Naive thymus-derived CD4-positive, alpha-beta T cell (primary cell): ENCODE measurements at regions of chr6 and their contacts with region 1.

Region 1: DNA sequence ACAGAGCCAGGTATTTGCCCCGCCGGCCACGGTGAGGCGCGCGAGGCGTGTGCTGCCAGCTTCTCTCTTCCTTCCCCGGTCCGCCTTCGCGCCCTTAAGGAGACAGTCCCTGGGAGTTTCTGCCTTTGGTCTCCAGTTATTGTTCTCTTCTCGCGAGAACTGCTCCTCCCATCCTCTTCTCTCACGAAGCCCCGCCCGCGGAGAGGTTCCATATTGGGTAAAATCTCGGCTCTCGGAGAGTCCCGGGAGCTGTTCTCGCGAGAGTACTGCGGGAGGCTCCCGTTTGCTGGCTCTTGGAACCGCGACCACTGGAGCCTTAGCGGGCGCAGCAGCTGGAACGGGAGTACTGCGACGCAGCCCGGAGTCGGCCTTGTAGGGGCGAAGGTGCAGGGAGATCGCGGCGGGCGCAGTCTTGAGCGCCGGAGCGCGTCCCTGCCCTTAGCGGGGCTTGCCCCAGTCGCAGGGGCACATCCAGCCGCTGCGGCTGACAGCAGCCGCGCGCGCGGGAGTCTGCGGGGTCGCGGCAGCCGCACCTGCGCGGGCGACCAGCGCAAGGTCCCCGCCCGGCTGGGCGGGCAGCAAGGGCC is at the start of gene MAPK14:
- DNase-seq: peak; percentile 91 to 100 (median 99)
- ATAC-seq: peak; percentile 95
- H3K4me3 ChIP-seq: peak within 1 kb of the TSS; percentile 63
- H3K4me3 Mint-ChIP-seq: peak within 1 kb of the TSS; percentile 91 to 100 (median 94)
- H3K27ac ChIP-seq: peak within 1 kb of the TSS; percentile 85
- H3K27ac Mint-ChIP-seq: peak within 1 kb of the TSS; percentile 87 to 95 (median 92)
- H3K4me1 ChIP-seq: peaks cover 16 to 23% of the 10 kb centered on the region in 2 donors
- H3K4me1 Mint-ChIP-seq: peaks cover 27 to 55% (median 43%) of the 10 kb centered on the region in 7 donors
- H3K27me3 ChIP-seq: no peaks in the 10 kb centered on the region
- H3K27me3 Mint-ChIP-seq: peaks cover 19 to 35% (median 24%) of the 10 kb centered on the region in 5 donors
- total RNA-seq, gene MAPK14: 47.2 to 81.0 (median 62.6) TPM

Region 2: DNA sequence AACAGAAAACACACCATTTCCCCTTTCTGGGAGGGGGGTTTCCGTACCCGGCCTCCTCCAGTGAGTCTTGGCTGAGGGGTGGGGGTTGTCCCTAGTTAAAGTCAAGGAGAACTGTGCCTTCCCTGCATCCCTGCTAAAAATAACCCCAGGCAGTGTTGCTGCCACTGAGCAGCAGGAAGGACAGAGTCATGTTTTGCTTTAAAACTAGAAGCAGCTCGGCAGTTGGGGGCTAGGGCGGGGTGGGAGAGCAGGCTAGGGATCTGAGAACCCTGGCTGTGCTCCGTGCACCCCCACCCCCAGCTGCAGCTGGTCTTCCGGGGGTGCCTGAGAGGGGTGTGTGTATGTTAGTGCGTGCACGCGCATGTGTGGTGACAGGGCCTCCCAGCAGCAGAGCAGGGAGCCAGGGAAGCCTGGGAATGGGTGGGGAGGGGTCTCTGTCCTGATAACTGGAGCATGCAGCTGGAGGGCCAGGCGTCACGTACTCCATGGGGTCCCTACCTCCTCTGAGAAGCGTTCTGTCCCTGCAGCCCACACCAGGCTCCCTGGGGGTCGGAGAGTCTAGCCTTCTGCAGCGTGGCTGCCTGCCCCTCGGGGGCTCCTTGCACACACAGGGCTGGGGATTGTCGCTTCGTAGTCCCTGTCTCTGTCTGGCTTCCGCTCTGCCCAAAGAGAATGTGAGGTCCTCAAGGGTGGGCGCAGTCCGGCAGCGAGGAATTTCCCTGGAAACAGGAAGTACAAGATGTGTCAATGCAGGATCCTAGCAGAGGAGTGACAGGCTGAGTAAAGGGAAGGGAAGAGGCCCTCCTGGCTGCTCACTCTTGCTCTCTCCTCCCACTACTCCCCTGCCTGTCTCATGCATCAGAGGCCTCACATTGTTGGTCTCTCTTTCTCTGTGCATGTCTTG is 307.5 kb before region 1 on chr6:
- CTCF ChIA-PET with region 1: no interaction called
- POLR2A ChIA-PET with region 1: no interaction called
- intact Hi-C with region 1: no loop called
- DNase-seq: peak in 1 of 9 donors; percentile 38
- ATAC-seq: peak; percentile 71
- H3K4me3 ChIP-seq: peak overlapping the region; percentile 11
- H3K4me3 Mint-ChIP-seq: peak overlapping the region; percentile 50 to 81 (median 70)
- H3K27ac ChIP-seq: peak overlapping the region; percentile 67
- H3K27ac Mint-ChIP-seq: peak overlapping the region; percentile 82 to 95 (median 90)
- H3K4me1 ChIP-seq: peaks cover 25 to 60% of the 10 kb centered on the region in 2 donors
- H3K4me1 Mint-ChIP-seq: peaks cover 54 to 91% (median 82%) of the 10 kb centered on the region in 7 donors
- H3K27me3 ChIP-seq: no peaks in the 10 kb centered on the region
- H3K27me3 Mint-ChIP-seq: no peaks in the 10 kb centered on the region

Region 3: DNA sequence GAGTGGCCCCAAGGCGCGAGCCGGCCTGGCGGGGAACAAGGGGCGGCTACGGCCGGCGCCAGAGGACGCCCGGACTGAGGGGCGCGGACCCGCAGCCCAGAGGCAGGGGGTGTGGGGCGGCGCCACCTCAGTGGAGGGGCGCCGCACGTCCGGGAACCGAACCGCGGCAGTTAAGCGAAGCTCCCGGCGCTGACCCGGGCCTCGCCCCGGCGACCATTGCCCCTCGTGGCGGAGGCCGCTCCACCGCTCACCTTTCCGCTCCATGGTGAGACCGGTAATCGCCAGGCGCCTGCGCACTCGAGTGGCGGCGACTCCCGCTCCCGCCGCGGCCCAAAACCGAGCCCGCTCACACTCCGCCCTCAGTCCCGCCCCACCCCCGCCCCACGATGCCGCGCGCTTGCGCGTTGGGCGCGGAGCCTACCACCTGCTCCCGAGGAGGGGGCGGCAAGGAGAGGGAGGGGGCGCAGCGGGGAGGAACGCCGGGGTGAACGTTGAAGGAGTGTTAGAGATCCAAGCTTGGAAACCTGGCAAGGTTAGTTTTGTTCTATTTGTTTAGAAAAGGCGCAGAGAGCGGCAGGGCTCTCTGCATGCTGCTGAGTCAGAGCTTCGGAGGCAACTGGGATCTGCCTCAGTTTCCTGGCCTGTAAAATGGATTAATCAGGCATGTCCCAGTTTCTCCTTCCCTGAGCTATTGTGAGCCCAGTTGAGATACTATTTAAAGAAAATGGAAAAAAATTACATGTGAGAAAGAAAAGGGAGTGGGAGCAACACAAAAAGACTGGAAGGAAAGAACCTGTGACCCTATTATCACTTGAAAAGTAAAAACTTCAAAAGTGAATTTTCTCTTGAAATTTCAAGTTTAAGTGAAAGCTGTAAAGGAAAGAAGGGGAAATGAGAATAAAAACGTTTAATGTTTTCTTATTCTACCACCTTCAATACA is 106.5 kb before region 1 on chr6 and contains the start of gene SRPK1:
- CTCF ChIA-PET with region 1: no interaction called
- POLR2A ChIA-PET with region 1: interaction called, 3 read pairs
- intact Hi-C with region 1: loop called (anchors 1 kb)
- DNase-seq: peak; percentile 58 to 92 (median 73)
- ATAC-seq: peak; percentile 87
- H3K4me3 ChIP-seq: peak within 1 kb of the TSS; percentile 98
- H3K4me3 Mint-ChIP-seq: peak within 1 kb of the TSS; percentile 87 to 100 (median 94)
- H3K27ac ChIP-seq: peak within 1 kb of the TSS; percentile 76
- H3K27ac Mint-ChIP-seq: peak within 1 kb of the TSS; percentile 81 to 98 (median 94)
- H3K4me1 ChIP-seq: peaks cover 12 to 28% of the 10 kb centered on the region in 2 donors
- H3K4me1 Mint-ChIP-seq: peaks cover 18 to 49% (median 41%) of the 10 kb centered on the region in 7 donors
- H3K27me3 ChIP-seq: no peaks in the 10 kb centered on the region
- H3K27me3 Mint-ChIP-seq: no peaks in the 10 kb centered on the region
- total RNA-seq, gene SRPK1: 29.1 to 80.9 (median 42.1) TPM

Region 4: DNA sequence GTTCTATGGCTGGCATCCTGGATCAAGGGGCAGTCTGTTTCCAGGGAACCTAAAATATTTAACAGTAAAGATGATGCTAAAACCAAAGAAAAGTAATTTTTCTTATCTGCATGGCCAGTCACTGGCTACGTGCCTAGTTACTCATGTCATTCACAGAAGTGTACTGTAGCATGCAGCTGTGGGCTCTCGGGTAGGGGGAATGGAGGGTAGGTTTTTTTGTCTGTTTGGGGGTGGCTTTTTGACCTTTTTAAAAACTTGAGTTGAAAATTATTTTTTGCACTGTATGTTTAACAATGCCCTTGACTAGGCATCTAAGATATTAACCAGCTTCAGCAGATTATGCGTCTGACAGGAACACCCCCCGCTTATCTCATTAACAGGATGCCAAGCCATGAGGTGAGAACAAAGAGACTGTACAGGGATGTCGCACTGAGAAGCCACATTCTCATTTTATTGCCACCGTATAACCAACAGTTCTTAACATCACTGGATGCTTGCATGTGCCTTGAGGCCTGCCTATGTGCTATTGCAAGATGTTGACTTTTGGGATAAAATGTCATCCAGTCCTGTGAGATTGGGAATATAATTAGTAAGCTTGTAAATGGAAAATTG is 72.4 kb after region 1 on chr6:
- CTCF ChIA-PET with region 1: interaction called, 104 read pairs
- POLR2A ChIA-PET with region 1: interaction called, 56 read pairs
- intact Hi-C with region 1: loop called (anchors 1 kb)
- DNase-seq: peak in 7 of 9 donors; percentile 63 to 81 (median 74)
- ATAC-seq: peak; percentile 89
- H3K4me3 ChIP-seq: peak overlapping the region; percentile 6
- H3K4me3 Mint-ChIP-seq: peak overlapping the region in 9 of 10 donors; percentile 56 to 85 (median 73)
- H3K27ac ChIP-seq: peak overlapping the region; percentile 52
- H3K27ac Mint-ChIP-seq: peak overlapping the region in 8 of 9 donors; percentile 87 to 97 (median 92)
- H3K4me1 ChIP-seq: peaks cover 32 to 35% of the 10 kb centered on the region in 2 donors
- H3K4me1 Mint-ChIP-seq: peaks cover 29 to 73% (median 66%) of the 10 kb centered on the region in 7 donors
- H3K27me3 ChIP-seq: no peaks in the 10 kb centered on the region
- H3K27me3 Mint-ChIP-seq: no peaks in the 10 kb centered on the region

Region 5: DNA sequence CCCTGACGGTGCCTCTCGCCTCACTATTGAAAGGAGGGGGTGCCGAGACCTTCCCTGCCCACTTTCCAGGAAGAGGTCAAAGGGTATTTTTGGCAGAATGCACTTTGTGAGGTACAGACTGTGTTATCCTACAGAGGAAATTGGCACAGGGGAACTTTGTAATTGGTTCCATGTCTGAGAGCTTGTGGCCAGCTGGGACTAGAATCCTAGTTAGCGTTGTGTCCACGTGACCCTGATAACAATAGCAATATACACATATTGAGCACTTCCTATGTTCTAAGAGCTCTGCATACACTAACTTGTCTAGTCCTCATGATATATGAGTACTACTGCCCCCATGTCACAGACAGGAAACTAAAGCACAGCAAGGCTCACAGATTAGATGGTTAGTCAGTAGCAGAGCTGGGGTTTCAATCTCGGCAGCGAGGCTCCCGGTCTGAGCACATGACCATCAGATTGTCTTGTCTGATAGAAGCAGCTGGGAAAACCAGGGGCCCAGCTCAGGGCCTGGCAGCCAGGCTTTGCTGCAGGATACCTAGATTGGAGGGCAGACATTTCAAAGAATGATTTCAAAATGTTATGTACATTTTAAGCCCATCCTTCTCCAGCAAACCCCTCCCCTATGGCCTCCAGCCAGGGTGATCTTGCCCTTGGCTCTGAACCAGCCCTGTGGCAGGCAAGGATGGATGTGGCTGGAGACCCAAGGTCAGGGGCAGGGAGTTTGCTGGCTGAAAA is 104.1 kb after region 1 on chr6:
- CTCF ChIA-PET with region 1: interaction called, 5 read pairs
- POLR2A ChIA-PET with region 1: interaction called, 13 read pairs
- intact Hi-C with region 1: loop called (anchors 1 kb)
- DNase-seq: peak in 7 of 9 donors; percentile 41 to 58 (median 48)
- ATAC-seq: peak; percentile 67
- H3K4me3 ChIP-seq: peak overlapping the region; percentile 72
- H3K4me3 Mint-ChIP-seq: peak overlapping the region; percentile 85 to 92 (median 88)
- H3K27ac ChIP-seq: peak overlapping the region; percentile 87
- H3K27ac Mint-ChIP-seq: peak overlapping the region; percentile 84 to 96 (median 92)
- H3K4me1 ChIP-seq: peaks cover 24 to 25% of the 10 kb centered on the region in 2 donors
- H3K4me1 Mint-ChIP-seq: peaks cover 37 to 55% (median 49%) of the 10 kb centered on the region in 7 donors
- H3K27me3 ChIP-seq: no peaks in the 10 kb centered on the region
- H3K27me3 Mint-ChIP-seq: no peaks in the 10 kb centered on the region

Region 6: DNA sequence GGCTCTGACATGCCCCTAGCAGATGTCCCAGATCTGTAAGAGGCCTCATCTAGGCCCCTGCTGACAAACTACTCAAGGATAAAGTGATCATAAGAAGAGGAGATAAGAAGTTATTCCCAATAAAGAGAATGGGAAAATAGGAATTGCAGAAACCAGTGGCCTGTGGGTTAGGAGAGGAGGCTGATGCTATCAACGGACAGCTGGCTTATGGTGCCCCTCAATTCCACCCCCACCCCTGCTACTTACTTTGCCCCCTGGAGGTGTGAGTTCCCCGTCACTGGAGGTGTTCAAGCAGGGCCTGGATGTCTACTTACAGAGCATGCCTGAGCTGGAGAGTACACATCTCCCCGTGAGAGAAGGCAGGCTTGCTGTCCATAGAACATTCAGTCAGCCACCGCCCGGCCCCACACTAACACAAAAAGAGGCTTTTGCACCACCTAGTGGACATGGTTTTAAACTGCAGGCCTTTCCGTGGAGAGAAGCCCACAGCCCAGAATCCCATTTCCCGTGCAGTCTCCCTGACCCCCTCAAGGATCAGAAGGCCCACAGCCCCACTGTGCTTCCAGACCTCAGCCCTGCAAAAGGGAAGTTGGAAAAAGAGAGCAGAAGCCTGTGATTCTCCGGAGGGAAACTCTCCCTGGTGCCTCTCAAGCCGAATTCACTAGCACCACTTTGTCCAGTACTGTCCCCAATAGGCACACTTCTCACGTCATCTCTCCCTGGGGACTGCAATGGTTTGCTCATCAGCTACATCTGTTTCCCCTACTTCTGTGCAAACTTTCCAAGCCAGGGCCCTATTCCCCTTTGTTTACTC is 332.9 kb after region 1 on chr6:
- CTCF ChIA-PET with region 1: interaction called, 7 read pairs
- POLR2A ChIA-PET with region 1: interaction called, 3 read pairs
- intact Hi-C with region 1: loop called (anchors 1 kb)
- DNase-seq: peak; percentile 37 to 74 (median 66)
- ATAC-seq: peak; percentile 95
- H3K4me3 ChIP-seq: no peak overlapping the region
- H3K4me3 Mint-ChIP-seq: no peak overlapping the region
- H3K27ac ChIP-seq: no peak overlapping the region
- H3K27ac Mint-ChIP-seq: peak overlapping the region in 2 of 9 donors; percentile 24 to 55
- H3K4me1 ChIP-seq: peaks cover 4 to 6% of the 10 kb centered on the region in 2 donors
- H3K4me1 Mint-ChIP-seq: peaks cover 0 to 30% (median 4%) of the 10 kb centered on the region in 7 donors
- H3K27me3 ChIP-seq: no peaks in the 10 kb centered on the region
- H3K27me3 Mint-ChIP-seq: peaks cover 0 to 15% (median 4%) of the 10 kb centered on the region in 5 donors

Region 7: DNA sequence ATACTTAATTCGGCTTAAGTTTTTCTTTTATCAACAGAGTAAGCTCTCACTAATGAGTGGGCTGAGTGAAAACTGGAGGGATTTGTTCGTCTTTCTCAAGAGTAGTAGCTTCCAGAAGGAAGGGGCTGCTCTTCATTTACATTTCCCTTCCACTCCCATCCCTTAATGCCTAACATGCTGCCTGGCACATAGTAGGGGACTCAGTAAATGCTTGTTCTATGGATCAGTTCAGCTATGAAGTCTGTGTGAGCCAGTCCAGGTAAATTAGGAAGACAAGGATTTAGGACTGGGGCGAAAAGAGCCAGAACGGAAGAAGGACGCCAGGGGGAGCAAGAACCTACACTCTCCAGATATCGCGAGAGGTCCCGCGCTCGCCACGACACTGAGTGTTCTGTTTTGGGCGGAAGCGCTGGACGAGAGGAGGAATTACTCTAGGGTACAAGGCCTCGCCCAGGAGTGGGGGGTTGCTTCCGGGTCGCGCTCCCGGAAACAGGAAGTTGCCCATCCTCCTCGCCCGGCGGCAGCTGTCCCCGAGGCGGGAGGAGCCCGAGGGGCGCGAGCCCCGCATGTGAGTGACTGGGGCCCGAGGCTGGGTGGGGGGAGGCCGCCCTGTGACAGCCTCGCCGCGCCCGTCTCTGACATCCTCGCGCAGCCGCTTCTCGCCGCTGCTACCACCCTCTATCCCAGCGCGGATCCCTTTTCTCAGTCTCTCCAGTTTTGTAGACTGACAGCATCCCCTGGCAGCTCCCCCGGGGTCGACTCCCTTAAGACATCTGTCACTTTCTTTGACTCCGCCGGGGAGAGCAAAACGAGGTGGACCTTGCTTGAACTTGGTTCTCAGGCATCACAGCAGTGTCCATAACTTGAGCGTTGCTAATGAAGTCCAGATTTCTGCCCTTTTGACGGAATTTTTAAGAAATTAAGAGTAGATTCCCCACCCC is 858.1 kb after region 1 on chr6 and contains the start of gene C6orf89:
- CTCF ChIA-PET with region 1: no interaction called
- POLR2A ChIA-PET with region 1: no interaction called
- intact Hi-C with region 1: loop called in 1 of 2 experiments (anchors 1 kb)
- DNase-seq: peak; percentile 86 to 98 (median 95)
- ATAC-seq: peak; percentile 100
- H3K4me3 ChIP-seq: peak within 1 kb of the TSS; percentile 96
- H3K4me3 Mint-ChIP-seq: peak within 1 kb of the TSS; percentile 83 to 92 (median 90)
- H3K27ac ChIP-seq: peak within 1 kb of the TSS; percentile 81
- H3K27ac Mint-ChIP-seq: peak within 1 kb of the TSS; percentile 90 to 97 (median 95)
- H3K4me1 ChIP-seq: peaks cover 16 to 24% of the 10 kb centered on the region in 2 donors
- H3K4me1 Mint-ChIP-seq: peaks cover 25 to 47% (median 39%) of the 10 kb centered on the region in 7 donors
- H3K27me3 ChIP-seq: no peaks in the 10 kb centered on the region
- H3K27me3 Mint-ChIP-seq: no peaks in the 10 kb centered on the region
- total RNA-seq, gene C6orf89: 34.6 to 48.2 (median 47.7) TPM